CD4-positive, alpha-beta memory T cell (primary cell): ENCODE measurements at regions of chr10 and their contacts with region 1.

Region 1: GRCh38 chr10:30529373-30529998 is 95.5 kb downstream of the MAP3K8 start:
- DNase-seq: peak; percentile 83 to 91 (median 87)
- H3K4me3 ChIP-seq: peak overlapping the region; percentile 48 to 56
- H3K4me3 Mint-ChIP-seq: peak overlapping the region; percentile 83 to 94 (median 88)
- H3K27ac ChIP-seq: peak overlapping the region; percentile 83
- H3K27ac Mint-ChIP-seq: peak overlapping the region; percentile 96 to 100 (median 98)
- H3K4me1 ChIP-seq: peaks cover 72% of the 10 kb centered on the region
- H3K4me1 Mint-ChIP-seq: peaks cover 38 to 73% (median 54%) of the 10 kb centered on the region in 4 donors
- H3K27me3 ChIP-seq: no peaks in the 10 kb centered on the region
- H3K27me3 Mint-ChIP-seq: no peaks in the 10 kb centered on the region

Region 2: GRCh38 chr10:29621161-29621560 is 908.3 kb before region 1 on chr10:
- CTCF ChIA-PET with region 1: no interaction called
- POLR2A ChIA-PET with region 1: no interaction called
- intact Hi-C with region 1: no loop called
- DNase-seq: no peak
- H3K4me3 ChIP-seq: no peak overlapping the region
- H3K4me3 Mint-ChIP-seq: no peak overlapping the region
- H3K27ac ChIP-seq: no peak overlapping the region
- H3K27ac Mint-ChIP-seq: peak overlapping the region in 1 of 7 donors; percentile 71
- H3K4me1 ChIP-seq: no peaks in the 10 kb centered on the region
- H3K4me1 Mint-ChIP-seq: peaks cover 15 to 25% (median 17%) of the 10 kb centered on the region in 4 donors
- H3K27me3 ChIP-seq: no peaks in the 10 kb centered on the region
- H3K27me3 Mint-ChIP-seq: no peaks in the 10 kb centered on the region

Region 3: DNA sequence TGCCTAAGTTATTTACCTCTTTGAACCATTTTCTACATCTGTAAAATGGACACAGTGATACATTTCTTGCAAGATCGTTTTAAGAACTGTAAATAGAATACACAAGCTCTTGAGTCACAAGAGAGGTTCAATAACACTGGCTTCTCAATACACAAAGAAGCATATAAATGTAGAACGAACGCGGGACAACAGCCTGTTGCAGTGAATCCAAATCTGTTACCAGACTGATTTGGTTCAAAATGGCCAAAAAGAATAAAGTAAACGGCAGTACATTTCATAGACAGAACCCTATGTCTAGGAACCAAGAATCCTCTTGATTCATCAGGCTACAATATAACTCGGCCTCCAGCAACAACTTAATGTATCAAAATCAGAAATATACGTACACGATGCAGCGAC is 181.1 kb before region 1 on chr10:
- CTCF ChIA-PET with region 1: interaction called, 3 read pairs
- POLR2A ChIA-PET with region 1: interaction called, 4 read pairs
- intact Hi-C with region 1: loop called (anchors 1 kb)
- DNase-seq: no peak
- H3K4me3 ChIP-seq: peak overlapping the region; percentile 82 to 96
- H3K4me3 Mint-ChIP-seq: peak overlapping the region; percentile 92 to 98 (median 94)
- H3K27ac ChIP-seq: peak overlapping the region; percentile 79
- H3K27ac Mint-ChIP-seq: peak overlapping the region; percentile 90 to 98 (median 94)
- H3K4me1 ChIP-seq: peaks cover 42% of the 10 kb centered on the region
- H3K4me1 Mint-ChIP-seq: peaks cover 35 to 60% (median 50%) of the 10 kb centered on the region in 4 donors
- H3K27me3 ChIP-seq: no peaks in the 10 kb centered on the region
- H3K27me3 Mint-ChIP-seq: no peaks in the 10 kb centered on the region

Region 4: DNA sequence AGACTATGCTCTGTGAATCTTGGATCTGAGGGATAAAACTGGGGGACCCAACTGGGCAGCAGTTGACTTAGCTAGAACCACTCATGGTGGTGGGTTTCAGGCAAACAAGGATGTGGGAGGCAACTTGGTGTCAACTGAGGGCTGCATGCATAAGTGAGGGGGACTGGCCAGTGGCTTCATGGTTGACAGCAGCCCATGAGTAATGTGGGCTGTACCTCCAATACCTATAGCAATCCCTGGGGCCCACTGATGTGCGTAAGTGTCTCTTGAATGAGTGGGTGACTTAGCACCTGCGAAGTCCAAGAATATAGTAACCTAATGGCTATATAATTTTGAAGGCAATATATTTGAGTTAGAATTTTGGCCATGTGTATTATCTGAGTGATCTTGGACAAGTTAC is 109.2 kb before region 1 on chr10:
- CTCF ChIA-PET with region 1: interaction called, 87 read pairs
- POLR2A ChIA-PET with region 1: interaction called, 32 read pairs
- intact Hi-C with region 1: loop called (anchors 1 kb)
- DNase-seq: no peak
- H3K4me3 ChIP-seq: no peak overlapping the region
- H3K4me3 Mint-ChIP-seq: no peak overlapping the region
- H3K27ac ChIP-seq: no peak overlapping the region
- H3K27ac Mint-ChIP-seq: no peak overlapping the region
- H3K4me1 ChIP-seq: peaks cover 15% of the 10 kb centered on the region
- H3K4me1 Mint-ChIP-seq: peaks cover 10 to 22% (median 15%) of the 10 kb centered on the region in 4 donors
- H3K27me3 ChIP-seq: no peaks in the 10 kb centered on the region
- H3K27me3 Mint-ChIP-seq: no peaks in the 10 kb centered on the region

Region 5: DNA sequence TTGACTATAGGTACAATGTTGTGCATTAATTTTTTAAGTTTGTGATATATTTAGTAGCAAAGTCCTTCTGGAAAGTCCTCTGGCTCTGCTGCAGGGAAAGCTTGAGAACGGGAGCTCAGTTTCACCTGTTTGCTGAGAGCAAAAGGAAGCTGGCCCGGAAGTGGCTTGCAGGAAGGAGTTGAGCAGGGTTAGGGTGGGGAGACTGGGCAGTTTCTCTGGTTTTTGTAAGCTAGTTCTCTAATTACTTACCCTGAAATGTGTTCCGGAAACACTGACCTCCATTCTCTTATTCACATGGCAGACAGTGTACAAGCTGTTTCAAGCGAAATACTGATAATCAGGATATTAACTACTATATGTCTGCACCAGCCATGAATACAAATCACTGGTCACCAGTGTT is 73.2 kb before region 1 on chr10:
- CTCF ChIA-PET with region 1: interaction called, 4 read pairs
- POLR2A ChIA-PET with region 1: interaction called, 25 read pairs
- intact Hi-C with region 1: no loop called
- DNase-seq: peak in 3 of 5 donors; percentile 22 to 40 (median 34)
- H3K4me3 ChIP-seq: peak overlapping the region in 1 of 2 donors; percentile 13
- H3K4me3 Mint-ChIP-seq: peak overlapping the region in 7 of 8 donors; percentile 55 to 82 (median 74)
- H3K27ac ChIP-seq: peak overlapping the region; percentile 24
- H3K27ac Mint-ChIP-seq: peak overlapping the region; percentile 35 to 84 (median 58)
- H3K4me1 ChIP-seq: peaks cover 42% of the 10 kb centered on the region
- H3K4me1 Mint-ChIP-seq: peaks cover 19 to 39% (median 27%) of the 10 kb centered on the region in 4 donors
- H3K27me3 ChIP-seq: no peaks in the 10 kb centered on the region
- H3K27me3 Mint-ChIP-seq: no peaks in the 10 kb centered on the region

Region 6: GRCh38 chr10:30502266-30503060 is 27.0 kb before region 1 on chr10:
- CTCF ChIA-PET with region 1: interaction called, 3 read pairs
- POLR2A ChIA-PET with region 1: interaction called, 11 read pairs
- intact Hi-C with region 1: loop called (anchors 2 kb)
- DNase-seq: peak in 4 of 5 donors; percentile 35 to 49 (median 48)
- H3K4me3 ChIP-seq: no peak overlapping the region
- H3K4me3 Mint-ChIP-seq: peak overlapping the region in 7 of 8 donors; percentile 11 to 82 (median 65)
- H3K27ac ChIP-seq: no peak overlapping the region
- H3K27ac Mint-ChIP-seq: peak overlapping the region; percentile 31 to 76 (median 47)
- H3K4me1 ChIP-seq: peaks cover 49% of the 10 kb centered on the region
- H3K4me1 Mint-ChIP-seq: peaks cover 37 to 62% (median 54%) of the 10 kb centered on the region in 4 donors
- H3K27me3 ChIP-seq: no peaks in the 10 kb centered on the region
- H3K27me3 Mint-ChIP-seq: no peaks in the 10 kb centered on the region